A549 (cell line): ENCODE measurements at regions of chr7 and their contacts with region 1.

Region 1: GRCh38 chr7:1412322-1413261 is 46.7 kb downstream of the MICALL2 start:
- DNase-seq: peak; percentile 85 to 88
- ATAC-seq: peak; percentile 63 to 91
- H3K4me3 ChIP-seq: peak overlapping the region; percentile 26; the same call in 2 of the 3 replicates
- H3K27ac ChIP-seq: 0 out of 6 replicates have a peak overlapping the region, but pooled peaks of 1 of the 2 experiments have one; percentile 34
- H3K4me1 ChIP-seq: no peaks in the 10 kb centered on the region
- CTCF ChIP-seq: peak; percentile 98
- EP300 ChIP-seq: no peak
- POLR2A ChIP-seq: no peak
- RAD21 ChIP-seq: peak; percentile 82 to 96

Region 2: GRCh38 chr7:1210321-1210978 is 202.1 kb before region 1 on chr7:
- CTCF ChIA-PET with region 1: interaction called, 10 read pairs
- POLR2A ChIA-PET with region 1: no interaction called
- DNase-seq: no peak
- ATAC-seq: no peak
- H3K4me3 ChIP-seq: no peak overlapping the region
- H3K27ac ChIP-seq: no peak overlapping the region
- H3K4me1 ChIP-seq: no peaks in the 10 kb centered on the region
- CTCF ChIP-seq: no peak
- EP300 ChIP-seq: no peak
- POLR2A ChIP-seq: no peak
- RAD21 ChIP-seq: no peak

Region 3: GRCh38 chr7:1425292-1426136 is 12.9 kb after region 1 on chr7:
- CTCF ChIA-PET with region 1: interaction called, 16 read pairs
- POLR2A ChIA-PET with region 1: no interaction called
- DNase-seq: peak in 1 of 2 experiments; percentile 64
- ATAC-seq: peak; percentile 58 to 78; a peak in 5 of 6 replicates
- H3K4me3 ChIP-seq: no peak overlapping the region
- H3K27ac ChIP-seq: no peak overlapping the region
- H3K4me1 ChIP-seq: no peaks in the 10 kb centered on the region
- CTCF ChIP-seq: no peak
- EP300 ChIP-seq: no peak
- POLR2A ChIP-seq: no peak
- RAD21 ChIP-seq: no peak